RWPE1 (cell line): ENCODE measurements at regions of chr1 and their contacts with region 1.

Region 1: DNA sequence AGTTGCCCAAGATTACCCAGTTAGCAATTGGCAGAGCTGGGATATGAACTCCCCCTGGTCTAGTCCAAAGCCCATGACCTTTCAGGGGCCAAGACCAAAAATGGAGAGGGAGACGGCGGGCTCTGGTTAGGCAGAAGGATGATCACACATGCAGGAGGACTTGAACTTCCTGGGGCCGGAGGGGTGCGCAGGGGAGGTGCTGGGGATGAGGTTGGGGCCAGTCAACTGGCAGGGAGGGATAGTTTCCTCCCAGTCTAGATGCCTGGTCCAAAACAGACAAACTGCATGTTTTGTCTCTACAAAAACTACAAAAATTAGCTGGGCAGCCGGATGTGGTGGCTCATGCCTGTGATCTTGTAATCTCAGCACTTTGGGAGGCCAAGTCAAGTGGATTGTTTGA is 78.1 kb downstream of the NKAIN1 start:
- DNase-seq: no peak
- H3K27ac ChIP-seq: peak overlapping the region; percentile 62
- CTCF ChIP-seq: no peak

Region 2: DNA sequence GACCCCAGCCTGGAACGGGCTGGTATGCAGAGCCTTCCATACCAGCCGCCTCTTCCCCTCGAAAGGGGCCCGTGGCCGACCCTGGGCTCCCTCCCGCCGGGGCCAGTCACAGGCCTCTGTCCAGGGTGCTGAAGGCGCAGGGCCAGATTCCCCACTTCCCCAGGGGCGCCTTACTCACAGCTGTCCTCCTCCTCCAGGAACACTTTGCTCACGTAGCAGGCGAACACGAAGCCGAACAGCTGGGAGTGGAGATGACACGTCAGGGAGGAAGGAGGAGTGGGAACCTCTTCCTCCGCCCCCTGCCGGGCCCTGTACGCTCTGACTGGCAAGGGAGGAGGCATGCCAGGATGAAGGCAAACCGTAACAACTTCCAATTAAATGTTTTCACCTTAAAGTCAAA is 20.8 kb after region 1 on chr1:
- CTCF ChIA-PET with region 1: interaction called, 11 read pairs
- POLR2A ChIA-PET with region 1: interaction called, 3 read pairs
- DNase-seq: peak; percentile 90
- H3K27ac ChIP-seq: no peak overlapping the region
- CTCF ChIP-seq: no peak